Sigmoid colon (tissue), 7 donors: ENCODE measurements at regions of chr7 and their contacts with region 1.

Region 1: DNA sequence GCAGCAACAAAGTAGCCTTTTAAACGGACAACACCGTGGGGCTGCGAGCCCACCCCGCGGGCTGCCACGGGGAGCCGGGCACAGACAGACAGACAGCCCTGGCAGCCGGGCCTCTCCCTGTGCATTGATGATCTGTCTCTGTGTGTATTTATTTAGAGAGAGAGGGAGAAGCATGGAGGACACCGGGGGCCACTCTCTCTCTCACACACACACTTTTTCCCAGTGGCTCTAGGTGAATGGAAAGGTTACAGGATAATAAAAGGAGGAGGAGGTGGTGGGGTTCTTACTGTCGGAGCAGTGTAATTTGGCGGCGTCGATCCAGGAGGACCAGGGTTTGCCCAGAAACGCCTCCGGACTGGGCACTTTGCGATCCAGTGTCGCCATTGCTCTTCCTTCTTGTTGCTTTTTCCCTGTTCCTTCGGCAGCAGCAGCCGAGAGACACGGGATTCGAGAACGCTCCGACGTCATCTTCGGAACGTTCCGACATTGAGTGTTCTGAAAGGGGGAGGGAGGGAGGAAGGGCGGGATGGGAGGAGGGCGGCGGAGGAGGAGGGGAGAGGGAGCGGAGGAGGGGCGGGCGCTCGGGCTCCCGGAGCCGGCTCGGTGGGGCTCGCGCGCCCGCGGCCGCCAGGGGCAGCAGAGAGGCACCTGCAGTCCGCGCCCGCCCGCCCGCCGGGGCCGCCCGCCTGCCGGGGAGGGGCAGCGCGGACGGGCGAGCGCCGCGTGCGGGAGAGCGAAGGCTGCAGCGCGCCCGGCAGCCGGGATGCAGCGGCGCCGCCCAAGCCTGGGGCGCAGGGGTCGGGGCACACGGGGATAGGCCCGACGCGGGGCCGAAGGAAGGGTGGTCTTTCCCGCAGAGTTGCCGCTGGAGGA is at the start of gene ATXN7L1:
- DNase-seq: peak; percentile 98
- H3K4me3 ChIP-seq: peak within 1 kb of the TSS; percentile 71 to 87 (median 80)
- H3K27ac ChIP-seq: peak within 1 kb of the TSS; percentile 80 to 90 (median 88)
- H3K4me1 ChIP-seq: peaks cover 0 to 48% (median 45%) of the 10 kb centered on the region in 4 donors
- H3K27me3 ChIP-seq: no peaks in the 10 kb centered on the region
- CTCF ChIP-seq: peak in 1 of 4 experiments; percentile 48
- EP300 ChIP-seq: peak in 1 of 4 donors; percentile 15
- POLR2A ChIP-seq: peak; percentile 68 to 70
- total RNA-seq, gene ATXN7L1: 12.8 to 20.5 (median 17.9) TPM

Region 2: DNA sequence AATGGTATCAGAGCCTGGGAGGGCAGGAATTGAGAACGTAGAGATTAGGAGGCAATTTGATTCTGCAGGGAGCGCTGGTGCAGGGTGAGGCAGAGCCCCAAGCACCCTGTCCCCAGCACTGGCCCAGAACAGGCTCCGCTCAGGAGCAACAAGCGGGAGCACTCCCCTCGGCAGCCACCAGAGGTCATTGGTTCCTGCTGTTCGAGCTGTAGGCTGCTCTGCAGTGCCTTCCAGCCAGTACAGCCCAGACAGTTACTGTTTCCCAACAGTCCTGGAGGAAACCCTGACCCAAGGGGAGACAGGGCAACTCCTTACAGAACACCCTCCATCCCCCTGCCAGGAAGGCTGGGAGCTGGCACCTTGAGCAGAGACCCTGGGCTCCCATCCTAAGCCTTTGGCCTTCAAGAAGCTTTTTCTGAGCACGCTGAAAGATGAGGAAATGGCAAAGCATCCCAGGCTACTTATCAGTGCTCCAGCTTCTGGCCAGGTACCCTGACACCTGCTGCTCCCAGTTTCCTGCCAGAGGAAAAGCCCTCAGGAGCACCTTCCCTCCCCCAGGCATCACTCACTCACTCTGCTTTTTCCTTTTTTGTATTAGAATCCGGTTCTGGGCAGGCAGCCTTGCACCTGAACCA is 223.9 kb before region 1 on chr7:
- intact Hi-C with region 1: loop called (anchors 5 kb)
- DNase-seq: peak; percentile 92
- H3K4me3 ChIP-seq: no peak overlapping the region
- H3K27ac ChIP-seq: no peak overlapping the region
- H3K4me1 ChIP-seq: peaks cover 0 to 48% (median 36%) of the 10 kb centered on the region in 4 donors
- H3K27me3 ChIP-seq: no peaks in the 10 kb centered on the region
- CTCF ChIP-seq: peak; percentile 76 to 91 (median 84)
- EP300 ChIP-seq: no peak
- POLR2A ChIP-seq: no peak

Region 3: GRCh38 chr7:105734233-105734632 is 142.1 kb before region 1 on chr7:
- intact Hi-C with region 1: no loop called
- DNase-seq: no peak
- H3K4me3 ChIP-seq: no peak overlapping the region
- H3K27ac ChIP-seq: peak overlapping the region in 1 of 4 donors; percentile 14
- H3K4me1 ChIP-seq: peaks cover 0 to 18% (median 13%) of the 10 kb centered on the region in 4 donors
- H3K27me3 ChIP-seq: no peaks in the 10 kb centered on the region
- CTCF ChIP-seq: no peak
- EP300 ChIP-seq: no peak
- POLR2A ChIP-seq: no peak

Region 4: GRCh38 chr7:105759670-105760550 is 116.4 kb before region 1 on chr7:
- intact Hi-C with region 1: loop called (anchors 2 kb)
- DNase-seq: peak; percentile 76
- H3K4me3 ChIP-seq: no peak overlapping the region
- H3K27ac ChIP-seq: no peak overlapping the region
- H3K4me1 ChIP-seq: peaks cover 0 to 11% (median 7%) of the 10 kb centered on the region in 4 donors
- H3K27me3 ChIP-seq: no peaks in the 10 kb centered on the region
- CTCF ChIP-seq: peak; percentile 9 to 69 (median 55)
- EP300 ChIP-seq: no peak
- POLR2A ChIP-seq: no peak

Region 5: GRCh38 chr7:105795390-105795729 is 81.0 kb before region 1 on chr7:
- intact Hi-C with region 1: loop called (anchors 10 kb)
- DNase-seq: peak; percentile 77
- H3K4me3 ChIP-seq: no peak overlapping the region
- H3K27ac ChIP-seq: peak overlapping the region; percentile 72 to 84 (median 80)
- H3K4me1 ChIP-seq: peaks cover 0 to 57% (median 48%) of the 10 kb centered on the region in 4 donors
- H3K27me3 ChIP-seq: no peaks in the 10 kb centered on the region
- CTCF ChIP-seq: no peak
- EP300 ChIP-seq: peak in 1 of 4 donors; percentile 18
- POLR2A ChIP-seq: no peak

Region 6: GRCh38 chr7:105826143-105826542 is 50.2 kb before region 1 on chr7:
- intact Hi-C with region 1: no loop called
- DNase-seq: no peak
- H3K4me3 ChIP-seq: no peak overlapping the region
- H3K27ac ChIP-seq: peak overlapping the region in 1 of 4 donors; percentile 38
- H3K4me1 ChIP-seq: peaks cover 0 to 48% (median 42%) of the 10 kb centered on the region in 4 donors
- H3K27me3 ChIP-seq: no peaks in the 10 kb centered on the region
- CTCF ChIP-seq: no peak
- EP300 ChIP-seq: no peak
- POLR2A ChIP-seq: no peak

Region 7: DNA sequence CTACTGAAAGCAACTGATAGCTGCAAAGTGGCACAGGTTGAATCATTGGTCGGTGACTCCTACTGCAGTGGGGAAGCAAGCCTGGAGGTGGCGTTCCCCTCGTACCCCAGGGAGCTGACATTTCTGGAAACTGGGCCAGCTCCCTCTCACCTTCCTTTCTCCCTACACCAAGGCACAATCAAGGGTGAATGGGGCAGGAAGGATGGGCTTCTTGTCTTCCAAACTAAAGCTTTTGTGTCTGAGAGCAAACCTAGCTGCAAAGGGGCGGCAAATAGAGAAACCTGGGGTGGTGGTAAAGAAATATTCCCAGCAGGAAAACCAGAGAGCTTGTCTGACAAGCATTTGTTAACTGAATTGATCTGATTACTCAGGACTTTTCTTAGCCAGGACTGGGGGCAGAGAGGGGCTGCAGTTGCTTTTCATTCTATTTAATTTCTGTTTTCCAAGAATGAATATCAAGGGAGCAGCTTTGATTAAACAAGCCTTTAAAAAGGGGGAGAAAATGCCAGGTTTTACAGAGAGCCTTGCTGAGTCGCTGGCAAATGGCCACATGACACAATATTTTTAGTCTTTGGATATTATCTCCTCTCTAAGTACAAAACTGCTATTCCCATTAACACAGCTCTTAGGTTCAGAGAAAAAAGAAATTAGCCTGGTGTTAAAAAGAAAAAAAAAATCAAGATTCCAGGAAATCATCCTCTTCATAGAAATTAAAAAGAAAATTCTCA is 114.6 kb after region 1 on chr7:
- intact Hi-C with region 1: no loop called
- DNase-seq: no peak
- H3K4me3 ChIP-seq: no peak overlapping the region
- H3K27ac ChIP-seq: peak overlapping the region in 1 of 4 donors; percentile 76
- H3K4me1 ChIP-seq: no peaks in the 10 kb centered on the region
- H3K27me3 ChIP-seq: no peaks in the 10 kb centered on the region
- CTCF ChIP-seq: no peak
- EP300 ChIP-seq: no peak
- POLR2A ChIP-seq: no peak

Region 8: GRCh38 chr7:106009403-106010226 is 133.3 kb after region 1 on chr7:
- intact Hi-C with region 1: loop called (anchors 2 kb)
- DNase-seq: peak; percentile 96
- H3K4me3 ChIP-seq: peak overlapping the region in 2 of 4 donors; percentile 4 to 19
- H3K27ac ChIP-seq: peak overlapping the region; percentile 61 to 80 (median 76)
- H3K4me1 ChIP-seq: peaks cover 0 to 40% (median 33%) of the 10 kb centered on the region in 4 donors
- H3K27me3 ChIP-seq: no peaks in the 10 kb centered on the region
- CTCF ChIP-seq: peak; percentile 91 to 97 (median 95)
- EP300 ChIP-seq: peak in 1 of 4 donors; percentile 60
- POLR2A ChIP-seq: no peak

Region 9: DNA sequence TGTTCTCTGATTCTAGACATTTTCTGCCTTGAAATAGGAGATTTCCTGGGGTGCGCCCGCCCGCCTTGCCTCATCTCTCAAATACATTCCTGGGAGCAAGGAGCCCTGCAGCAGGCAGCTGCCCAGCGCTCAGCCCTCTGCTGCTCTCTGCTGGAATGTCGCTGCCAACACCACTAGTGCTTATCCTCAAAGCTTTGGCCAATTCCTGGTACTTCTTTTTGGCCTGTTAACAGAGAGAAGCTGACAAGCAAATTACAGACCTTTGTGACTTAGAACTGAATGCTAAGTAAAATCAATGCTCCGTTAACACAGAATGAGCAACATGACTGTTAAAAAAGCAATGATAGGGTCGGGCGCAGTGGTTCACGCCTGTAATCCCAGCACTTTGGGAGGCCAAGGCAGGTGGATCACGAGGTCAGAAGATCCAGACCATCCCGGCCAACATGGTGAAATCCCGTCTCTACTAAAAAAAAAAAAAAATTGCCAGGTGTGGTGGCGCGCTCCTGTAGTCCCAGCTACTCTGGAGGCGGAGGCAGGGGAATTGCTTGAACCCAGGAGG is 277.6 kb after region 1 on chr7:
- intact Hi-C with region 1: loop called (anchors 10 kb)
- DNase-seq: peak; percentile 93
- H3K4me3 ChIP-seq: peak overlapping the region in 1 of 4 donors; percentile 11
- H3K27ac ChIP-seq: peak overlapping the region in 2 of 4 donors; percentile 19 to 35
- H3K4me1 ChIP-seq: peaks cover 0 to 17% (median 12%) of the 10 kb centered on the region in 4 donors
- H3K27me3 ChIP-seq: no peaks in the 10 kb centered on the region
- CTCF ChIP-seq: peak; percentile 92 to 95 (median 94)
- EP300 ChIP-seq: no peak
- POLR2A ChIP-seq: no peak